Mammary epithelial cell (primary cell): ENCODE measurements at regions of chr18 and their contacts with region 1.

Region 1: DNA sequence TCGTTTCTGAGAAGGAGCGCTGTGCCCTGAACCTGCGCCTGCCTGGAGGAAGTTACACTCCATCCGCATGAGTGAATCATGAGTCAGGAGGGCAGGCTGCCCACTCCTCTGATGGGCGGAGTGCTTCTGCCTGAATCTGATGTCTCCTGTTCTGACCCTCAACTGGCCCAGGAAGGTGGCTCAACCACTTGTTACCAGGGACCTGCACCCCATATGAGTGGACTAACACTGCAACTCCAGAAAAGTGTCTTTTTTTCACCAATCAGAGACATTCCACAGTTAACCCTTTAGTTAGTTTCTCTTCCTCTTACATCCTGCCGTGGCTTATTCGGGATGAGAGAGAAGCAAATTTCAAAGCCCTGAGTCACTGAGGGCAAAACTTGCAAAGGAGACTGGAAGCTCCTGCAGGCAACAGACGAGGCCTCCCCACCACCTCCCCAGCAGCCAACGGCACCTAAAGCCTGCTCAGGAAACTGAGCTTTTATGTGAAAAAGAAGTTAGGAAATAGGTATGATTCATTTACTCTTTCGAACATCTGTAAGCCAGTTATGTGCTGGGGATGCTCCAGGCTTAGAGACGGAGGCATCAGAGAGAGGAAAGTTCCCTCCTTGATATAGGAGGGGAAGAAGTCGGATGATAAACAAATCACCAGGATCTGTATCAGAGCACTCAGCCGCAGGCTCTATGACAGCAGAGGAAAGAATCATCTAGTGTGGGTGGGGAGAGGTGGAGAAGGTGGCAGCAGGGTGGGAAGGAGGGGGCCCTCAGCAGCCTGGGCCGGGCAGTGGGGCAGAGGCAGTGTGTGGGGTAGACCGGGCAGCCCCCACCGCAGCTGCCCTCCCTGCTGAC is 30.9 kb downstream of the MBP start:
- DNase-seq: peak; percentile 98
- H3K4me3 ChIP-seq: peak overlapping the region; percentile 1 to 26 (median 1)
- H3K27ac ChIP-seq: peak overlapping the region; percentile 97
- H3K4me1 ChIP-seq: peaks cover 56% of the 10 kb centered on the region
- H3K27me3 ChIP-seq: no peaks in the 10 kb centered on the region
- CTCF ChIP-seq: no peak

Region 2: GRCh38 chr18:76958692-76959341 is 142.8 kb before region 1 on chr18:
- CTCF ChIA-PET with region 1: no interaction called
- dilution Hi-C with region 1: no loop called
- in situ Hi-C with region 1: no loop called
- intact Hi-C with region 1: no loop called
- DNase-seq: no peak
- H3K4me3 ChIP-seq: no peak overlapping the region
- H3K27ac ChIP-seq: no peak overlapping the region
- H3K4me1 ChIP-seq: no peaks in the 10 kb centered on the region
- H3K27me3 ChIP-seq: no peaks in the 10 kb centered on the region
- CTCF ChIP-seq: no peak

Region 3: DNA sequence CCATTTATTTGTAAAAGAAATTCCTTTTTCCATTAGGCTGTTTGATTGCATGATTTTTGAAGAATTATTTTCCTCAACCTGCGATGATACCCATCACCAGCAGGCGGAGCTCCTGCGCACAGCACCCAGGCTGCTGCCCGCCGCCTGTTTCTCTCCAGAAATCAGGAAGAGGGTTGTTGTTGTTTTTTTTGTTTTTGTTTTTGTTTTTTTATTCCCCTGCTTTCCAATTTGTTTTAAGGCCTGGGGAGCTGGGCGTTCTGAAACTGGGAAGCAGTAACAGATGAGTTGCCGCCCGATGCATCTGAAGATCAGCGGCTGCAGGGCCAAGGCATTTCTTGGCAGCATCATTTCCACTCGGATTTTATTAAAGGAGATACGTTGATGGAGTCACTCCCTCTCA is 101.1 kb before region 1 on chr18:
- CTCF ChIA-PET with region 1: no interaction called
- dilution Hi-C with region 1: no loop called
- in situ Hi-C with region 1: no loop called
- intact Hi-C with region 1: loop called (anchors 2 kb)
- DNase-seq: peak; percentile 17
- H3K4me3 ChIP-seq: no peak overlapping the region
- H3K27ac ChIP-seq: no peak overlapping the region
- H3K4me1 ChIP-seq: no peaks in the 10 kb centered on the region
- H3K27me3 ChIP-seq: no peaks in the 10 kb centered on the region
- CTCF ChIP-seq: peak; percentile 95 to 97

Region 4: GRCh38 chr18:77067291-77068061 is 34.2 kb before region 1 on chr18:
- CTCF ChIA-PET with region 1: no interaction called
- dilution Hi-C with region 1: no loop called
- in situ Hi-C with region 1: no loop called
- intact Hi-C with region 1: loop called (anchors 1 kb)
- DNase-seq: peak; percentile 89
- H3K4me3 ChIP-seq: no peak overlapping the region
- H3K27ac ChIP-seq: peak overlapping the region; percentile 81
- H3K4me1 ChIP-seq: peaks cover 78% of the 10 kb centered on the region
- H3K27me3 ChIP-seq: no peaks in the 10 kb centered on the region
- CTCF ChIP-seq: no peak

Region 5: DNA sequence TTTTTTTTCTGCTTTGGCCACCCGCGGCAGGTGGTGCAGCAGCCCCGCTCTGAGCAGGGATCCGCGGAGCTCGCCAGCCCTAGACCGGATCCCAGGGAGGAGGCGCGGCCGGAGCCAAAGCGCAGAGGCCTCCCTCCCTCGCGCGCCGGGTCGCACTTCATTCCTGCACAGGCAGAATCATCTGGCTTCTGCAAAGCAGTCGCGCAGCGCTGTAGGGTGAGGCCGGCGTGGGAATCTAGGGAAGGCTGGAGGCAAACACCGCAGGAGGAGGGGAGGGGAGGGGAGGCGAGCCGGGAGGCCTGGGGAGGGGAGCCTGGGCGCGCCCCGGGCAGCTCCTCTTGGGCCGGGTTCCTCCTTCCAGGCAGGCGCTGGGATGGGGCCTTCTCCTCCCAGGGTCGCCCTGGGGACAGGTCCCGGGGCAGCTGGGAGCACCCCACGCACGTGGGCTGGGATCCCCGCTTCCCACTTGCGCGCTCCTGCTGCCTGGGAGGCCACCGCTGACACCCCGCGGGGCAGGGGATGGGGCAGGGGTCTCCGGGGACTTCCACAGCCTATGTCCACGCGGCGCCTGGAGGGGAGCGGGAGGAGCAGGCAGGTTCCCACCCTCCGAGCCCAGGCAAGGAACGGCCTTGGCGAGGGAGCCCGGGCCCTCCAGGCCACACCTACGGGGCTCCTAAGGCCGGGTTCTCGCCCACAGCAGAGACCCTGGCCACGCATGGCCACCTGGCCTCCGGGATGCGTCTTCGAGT is 14.1 kb before region 1 on chr18:
- CTCF ChIA-PET with region 1: no interaction called
- dilution Hi-C with region 1: no loop called
- in situ Hi-C with region 1: no loop called
- intact Hi-C with region 1: loop called (anchors 1 kb)
- DNase-seq: no peak
- H3K4me3 ChIP-seq: peak overlapping the region in 1 of 3 experiments; percentile 17
- H3K27ac ChIP-seq: peak overlapping the region; percentile 44
- H3K4me1 ChIP-seq: peaks cover 50% of the 10 kb centered on the region
- H3K27me3 ChIP-seq: no peaks in the 10 kb centered on the region
- CTCF ChIP-seq: no peak

Region 6: DNA sequence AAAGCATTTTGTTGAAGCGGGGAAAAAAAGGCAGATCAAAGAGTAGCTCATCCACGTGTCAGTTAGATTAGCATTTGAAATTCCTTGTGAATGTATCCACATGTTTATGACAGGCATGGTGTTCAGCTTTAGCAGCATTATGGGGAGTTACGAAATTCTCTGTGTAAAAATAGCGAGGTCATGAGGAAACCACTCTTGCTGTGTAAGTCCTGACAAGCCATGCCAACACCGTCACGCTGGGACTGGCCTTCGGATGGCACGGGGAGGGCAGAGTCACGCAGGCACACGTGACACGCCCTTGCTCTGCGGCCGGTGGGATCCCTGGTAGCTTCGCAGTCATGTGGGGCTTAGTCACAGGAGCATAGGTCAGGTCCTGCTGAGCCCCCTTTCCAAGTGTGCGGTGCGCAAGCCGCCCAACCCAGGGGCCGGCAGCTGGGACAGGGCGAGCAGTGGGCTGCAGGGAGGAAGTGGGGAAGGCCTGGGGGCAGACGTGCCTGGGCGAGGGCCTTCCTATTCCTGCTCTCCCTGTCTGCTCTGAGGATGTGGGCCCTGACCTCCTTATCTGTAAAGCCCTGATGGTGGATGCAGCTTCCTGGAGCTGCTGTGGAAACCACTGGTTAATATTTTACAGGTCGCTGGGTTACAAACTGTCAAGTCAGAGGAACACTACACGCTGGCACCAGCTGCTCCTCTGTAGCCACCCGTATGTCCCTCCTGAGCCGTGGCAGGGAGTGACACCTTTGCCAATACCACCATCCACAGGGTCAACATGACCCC is 13.0 kb after region 1 on chr18:
- CTCF ChIA-PET with region 1: interaction called, 3 read pairs
- dilution Hi-C with region 1: no loop called
- in situ Hi-C with region 1: no loop called
- intact Hi-C with region 1: loop called (anchors 1 kb)
- DNase-seq: peak; percentile 99
- H3K4me3 ChIP-seq: no peak overlapping the region
- H3K27ac ChIP-seq: peak overlapping the region; percentile 87
- H3K4me1 ChIP-seq: peaks cover 37% of the 10 kb centered on the region
- H3K27me3 ChIP-seq: no peaks in the 10 kb centered on the region
- CTCF ChIP-seq: no peak

Region 7: DNA sequence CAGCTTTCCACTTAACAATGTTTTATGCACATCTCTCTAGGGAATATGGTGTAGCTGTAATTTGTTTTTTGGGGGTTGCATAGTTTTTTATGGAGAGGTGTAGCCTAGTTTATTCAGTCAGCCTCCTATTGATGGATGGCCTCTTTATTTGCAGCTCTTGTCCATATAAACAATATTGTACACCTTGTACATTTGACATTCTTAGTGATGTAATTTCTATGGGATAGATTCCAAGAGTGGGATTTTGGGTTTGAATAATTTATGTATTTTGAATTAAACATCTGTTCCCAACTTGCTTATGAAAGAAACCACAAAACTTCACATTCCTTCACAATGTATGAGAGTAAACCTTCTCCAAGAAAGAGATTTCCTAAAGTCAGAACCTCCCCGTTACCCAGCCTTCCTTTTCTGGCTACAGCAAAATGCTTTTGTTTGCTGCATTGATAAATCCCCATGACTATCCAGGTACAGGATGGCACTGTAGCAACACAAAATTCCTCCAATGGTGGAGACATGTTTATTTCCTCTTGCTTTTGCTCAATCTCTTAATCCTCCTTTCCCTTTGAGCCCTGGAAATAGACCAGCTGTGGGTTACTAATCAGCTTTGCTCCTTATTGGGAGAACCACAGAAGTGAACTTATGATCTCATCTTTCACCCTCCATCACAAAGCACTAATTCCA is 89.6 kb after region 1 on chr18:
- CTCF ChIA-PET with region 1: no interaction called
- dilution Hi-C with region 1: no loop called
- in situ Hi-C with region 1: no loop called
- intact Hi-C with region 1: no loop called
- DNase-seq: no peak
- H3K4me3 ChIP-seq: no peak overlapping the region
- H3K27ac ChIP-seq: no peak overlapping the region
- H3K4me1 ChIP-seq: no peaks in the 10 kb centered on the region
- H3K27me3 ChIP-seq: no peaks in the 10 kb centered on the region
- CTCF ChIP-seq: no peak

Region 8: DNA sequence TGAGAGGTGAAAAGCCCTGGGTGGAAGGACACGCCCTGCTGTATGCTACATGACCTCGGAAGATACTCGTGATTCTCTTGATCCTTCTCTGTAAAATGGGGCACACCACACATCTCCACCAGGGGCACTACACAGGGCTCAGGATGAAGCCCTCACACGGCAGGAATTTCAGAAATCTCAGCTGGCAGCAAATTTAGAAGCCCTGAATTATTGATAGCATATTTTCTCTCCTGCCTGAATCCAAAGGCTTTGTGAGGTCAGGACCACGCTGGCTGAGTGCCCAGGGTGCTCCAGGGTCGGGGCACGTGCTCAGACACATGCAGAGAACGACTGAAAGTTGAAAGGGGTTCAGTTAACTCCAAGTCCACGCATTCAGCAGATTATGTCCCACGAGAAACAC is 105.9 kb after region 1 on chr18:
- CTCF ChIA-PET with region 1: no interaction called
- dilution Hi-C with region 1: no loop called
- in situ Hi-C with region 1: no loop called
- intact Hi-C with region 1: loop called (anchors 1 kb)
- DNase-seq: peak; percentile 42
- H3K4me3 ChIP-seq: no peak overlapping the region
- H3K27ac ChIP-seq: no peak overlapping the region
- H3K4me1 ChIP-seq: no peaks in the 10 kb centered on the region
- H3K27me3 ChIP-seq: no peaks in the 10 kb centered on the region
- CTCF ChIP-seq: peak; percentile 67 to 78

Region 9: DNA sequence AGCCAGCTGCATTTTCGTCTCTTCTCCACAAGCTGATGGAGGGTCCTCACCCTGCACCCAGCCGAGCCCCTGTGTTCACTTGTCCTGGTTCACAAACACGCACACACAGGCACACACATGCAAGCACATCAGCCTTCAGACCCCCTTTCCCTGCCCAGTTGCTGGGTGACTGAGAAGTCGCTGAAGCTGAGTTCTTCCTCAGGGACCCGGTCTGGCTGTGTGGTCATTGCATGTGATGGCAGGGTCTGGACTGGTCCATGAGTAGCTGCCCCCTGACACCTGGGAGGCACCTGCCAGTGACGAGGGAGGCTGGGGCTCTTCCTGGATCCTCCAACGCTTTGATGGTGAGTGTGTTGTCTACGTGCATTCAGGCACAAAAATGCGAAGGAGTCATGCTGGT is 1331.9 kb after region 1 on chr18:
- CTCF ChIA-PET with region 1: no interaction called
- dilution Hi-C with region 1: no loop called
- in situ Hi-C with region 1: no loop called
- intact Hi-C with region 1: no loop called
- DNase-seq: no peak
- H3K4me3 ChIP-seq: no peak overlapping the region
- H3K27ac ChIP-seq: no peak overlapping the region
- H3K4me1 ChIP-seq: no peaks in the 10 kb centered on the region
- H3K27me3 ChIP-seq: no peaks in the 10 kb centered on the region
- CTCF ChIP-seq: no peak